CD4-positive, alpha-beta memory T cell (primary cell): ENCODE measurements at regions of chr20 and their contacts with region 1.

Region 1: DNA sequence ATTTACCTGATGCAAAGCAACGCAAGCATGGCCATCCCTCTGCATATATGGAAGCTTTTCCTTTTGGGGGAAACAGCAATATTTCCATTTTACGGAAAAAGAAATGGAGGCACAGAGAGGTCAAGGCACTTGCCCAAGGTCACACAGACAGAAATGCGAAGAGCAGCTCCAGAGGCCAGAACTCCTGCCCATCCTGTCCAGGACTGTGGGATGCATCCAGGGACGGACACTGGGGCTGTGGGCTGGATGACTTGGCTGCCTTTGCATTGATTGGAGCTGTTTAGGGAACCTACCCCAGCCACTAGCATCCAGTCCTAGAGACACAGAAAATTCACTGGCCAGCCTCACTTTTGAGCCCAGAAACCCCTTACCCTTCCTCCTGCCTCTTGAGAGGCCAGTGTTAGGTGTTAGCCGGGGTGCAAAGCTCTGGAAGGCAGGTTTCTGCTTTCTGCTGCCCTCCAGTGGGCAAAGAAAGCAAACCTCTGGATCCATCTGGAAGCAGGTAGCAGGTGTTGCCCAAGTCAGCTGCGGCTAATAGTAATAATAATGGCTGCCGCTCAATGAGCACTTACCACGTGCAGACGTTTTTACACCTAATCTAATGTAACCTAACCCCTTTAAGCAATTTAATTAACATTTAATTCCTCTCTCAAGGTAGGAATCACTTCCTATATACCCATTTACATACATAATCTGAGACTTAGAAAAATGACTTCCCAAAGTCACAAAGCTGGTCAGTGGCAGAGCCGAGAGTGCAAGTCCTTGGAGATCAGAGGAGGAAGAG is 31.7 kb upstream of the CCN5 start:
- DNase-seq: peak; percentile 45 to 68 (median 53)
- H3K4me3 ChIP-seq: no peak overlapping the region
- H3K4me3 Mint-ChIP-seq: no peak overlapping the region
- H3K27ac ChIP-seq: no peak overlapping the region
- H3K27ac Mint-ChIP-seq: peak overlapping the region in 2 of 7 donors; percentile 2 to 10
- H3K4me1 ChIP-seq: peaks cover 8% of the 10 kb centered on the region
- H3K4me1 Mint-ChIP-seq: peaks cover 0 to 15% (median 7%) of the 10 kb centered on the region in 4 donors
- H3K27me3 ChIP-seq: no peaks in the 10 kb centered on the region
- H3K27me3 Mint-ChIP-seq: peaks cover 4 to 8% of the 10 kb centered on the region in 2 donors

Region 2: GRCh38 chr20:44615169-44615791 is 68.2 kb before region 1 on chr20:
- CTCF ChIA-PET with region 1: interaction called, 52 read pairs
- POLR2A ChIA-PET with region 1: interaction called, 3 read pairs
- intact Hi-C with region 1: no loop called
- DNase-seq: peak in 1 of 5 donors; percentile 9
- H3K4me3 ChIP-seq: no peak overlapping the region
- H3K4me3 Mint-ChIP-seq: peak overlapping the region in 5 of 8 donors; percentile 12 to 62 (median 52)
- H3K27ac ChIP-seq: no peak overlapping the region
- H3K27ac Mint-ChIP-seq: peak overlapping the region; percentile 78 to 94 (median 91)
- H3K4me1 ChIP-seq: peaks cover 36% of the 10 kb centered on the region
- H3K4me1 Mint-ChIP-seq: peaks cover 27 to 60% (median 41%) of the 10 kb centered on the region in 4 donors
- H3K27me3 ChIP-seq: no peaks in the 10 kb centered on the region
- H3K27me3 Mint-ChIP-seq: no peaks in the 10 kb centered on the region

Region 3: GRCh38 chr20:44642203-44643153 is 41.0 kb before region 1 on chr20:
- CTCF ChIA-PET with region 1: interaction called, 53 read pairs
- POLR2A ChIA-PET with region 1: interaction called, 25 read pairs
- intact Hi-C with region 1: loop called (anchors 2 kb)
- DNase-seq: peak in 4 of 5 donors; percentile 34 to 53 (median 39)
- H3K4me3 ChIP-seq: peak overlapping the region; percentile 1 to 17
- H3K4me3 Mint-ChIP-seq: peak overlapping the region; percentile 36 to 87 (median 68)
- H3K27ac ChIP-seq: peak overlapping the region; percentile 82
- H3K27ac Mint-ChIP-seq: peak overlapping the region; percentile 94 to 99 (median 96)
- H3K4me1 ChIP-seq: peaks cover 68% of the 10 kb centered on the region
- H3K4me1 Mint-ChIP-seq: peaks cover 54 to 80% (median 67%) of the 10 kb centered on the region in 4 donors
- H3K27me3 ChIP-seq: no peaks in the 10 kb centered on the region
- H3K27me3 Mint-ChIP-seq: no peaks in the 10 kb centered on the region

Region 4: GRCh38 chr20:44664131-44664530 is 19.3 kb before region 1 on chr20:
- CTCF ChIA-PET with region 1: interaction called, 81 read pairs
- POLR2A ChIA-PET with region 1: no interaction called
- intact Hi-C with region 1: no loop called
- DNase-seq: no peak
- H3K4me3 ChIP-seq: no peak overlapping the region
- H3K4me3 Mint-ChIP-seq: no peak overlapping the region
- H3K27ac ChIP-seq: no peak overlapping the region
- H3K27ac Mint-ChIP-seq: no peak overlapping the region
- H3K4me1 ChIP-seq: peaks cover 6% of the 10 kb centered on the region
- H3K4me1 Mint-ChIP-seq: peaks cover 3 to 10% (median 6%) of the 10 kb centered on the region in 4 donors
- H3K27me3 ChIP-seq: no peaks in the 10 kb centered on the region
- H3K27me3 Mint-ChIP-seq: no peaks in the 10 kb centered on the region

Region 5: GRCh38 chr20:44866703-44867335 is 183.4 kb after region 1 on chr20:
- CTCF ChIA-PET with region 1: interaction called, 15 read pairs
- POLR2A ChIA-PET with region 1: no interaction called
- intact Hi-C with region 1: loop called (anchors 1 kb)
- DNase-seq: no peak
- H3K4me3 ChIP-seq: no peak overlapping the region
- H3K4me3 Mint-ChIP-seq: peak overlapping the region in 7 of 8 donors; percentile 57 to 82 (median 74)
- H3K27ac ChIP-seq: no peak overlapping the region
- H3K27ac Mint-ChIP-seq: peak overlapping the region in 2 of 7 donors; percentile 29 to 65
- H3K4me1 ChIP-seq: peaks cover 4% of the 10 kb centered on the region
- H3K4me1 Mint-ChIP-seq: peaks cover 3 to 10% (median 9%) of the 10 kb centered on the region in 4 donors
- H3K27me3 ChIP-seq: peaks cover 3% of the 10 kb centered on the region
- H3K27me3 Mint-ChIP-seq: peaks cover 5 to 6% of the 10 kb centered on the region in 2 donors